ENCODE measurements at regions of chr4 and their contacts with region 1.

Region 1: DNA sequence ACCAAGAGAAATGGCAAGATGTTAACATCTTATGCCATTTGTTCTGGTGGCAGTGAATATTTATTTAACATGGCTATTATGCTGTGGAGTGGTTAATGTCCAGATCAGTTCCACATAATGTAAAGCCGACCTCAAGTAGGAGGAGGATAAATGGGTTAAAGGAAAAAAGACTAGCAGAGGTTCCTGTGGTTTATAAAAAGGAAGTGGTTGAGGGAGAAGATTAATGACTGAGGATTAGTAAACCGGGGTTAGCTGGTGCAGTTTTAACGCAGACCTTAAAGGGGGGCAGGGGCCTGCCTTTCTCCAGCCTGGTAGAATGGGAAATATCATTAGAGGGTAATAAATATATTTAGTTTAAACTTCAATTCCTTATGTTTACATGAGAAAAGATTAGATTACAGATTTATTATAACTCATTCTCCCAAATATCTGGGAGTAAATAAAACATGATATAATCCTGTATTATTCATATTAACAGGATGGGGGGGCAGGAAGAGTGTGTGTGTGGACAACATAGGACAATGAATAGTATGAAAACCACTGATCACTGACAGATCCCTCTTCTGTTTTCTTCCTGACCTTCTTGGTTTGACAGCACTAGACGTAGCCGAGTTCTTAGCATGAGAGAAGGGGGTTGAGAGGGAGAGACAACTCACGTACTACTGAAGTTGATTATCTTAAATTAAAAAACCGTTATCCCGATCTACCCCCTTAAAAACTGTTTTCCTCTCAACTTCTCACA is 124.1 kb upstream of the LIMCH1 start:
- DNase-seq: no peak
- H3K4me3 ChIP-seq: no peak overlapping the region
- H3K27me3 ChIP-seq: no peaks in the 10 kb centered on the region
- CTCF ChIP-seq: no peak

Region 2: GRCh38 chr4:41427306-41427882 is 13.6 kb after region 1 on chr4:
- CTCF ChIA-PET with region 1: interaction called, 3 read pairs
- POLR2A ChIA-PET with region 1: interaction called, 12 read pairs
- DNase-seq: no peak
- H3K4me3 ChIP-seq: no peak overlapping the region
- H3K27me3 ChIP-seq: no peaks in the 10 kb centered on the region
- CTCF ChIP-seq: no peak

Measured in BJ (cell line).